ENCODE measurements at regions of chr12 and their contacts with region 1.

Region 1: DNA sequence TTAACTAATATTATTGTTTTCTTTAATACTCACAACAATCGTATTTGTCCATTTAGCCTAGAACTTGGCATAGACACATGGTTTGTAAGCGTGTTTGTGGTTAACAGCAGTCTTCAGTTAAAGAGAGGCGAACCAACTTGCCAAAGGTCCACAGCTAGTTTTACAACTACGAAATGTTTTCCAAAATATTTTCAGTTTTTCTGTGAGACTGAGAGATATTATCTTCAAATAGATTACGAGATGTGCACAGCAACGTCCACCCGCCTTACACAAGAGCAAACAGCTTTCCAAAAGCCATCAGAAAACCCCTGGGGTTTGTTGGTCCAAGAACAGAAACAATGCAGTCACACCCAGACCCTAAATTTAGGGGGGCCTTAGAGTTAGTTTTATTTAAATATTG is 58.6 kb upstream of the RASSF3 start:
- H3K4me3 ChIP-seq: no peak overlapping the region
- H3K27ac ChIP-seq: no peak overlapping the region
- H3K4me1 ChIP-seq: no peaks in the 10 kb centered on the region
- CTCF ChIP-seq: no peak

Region 2: DNA sequence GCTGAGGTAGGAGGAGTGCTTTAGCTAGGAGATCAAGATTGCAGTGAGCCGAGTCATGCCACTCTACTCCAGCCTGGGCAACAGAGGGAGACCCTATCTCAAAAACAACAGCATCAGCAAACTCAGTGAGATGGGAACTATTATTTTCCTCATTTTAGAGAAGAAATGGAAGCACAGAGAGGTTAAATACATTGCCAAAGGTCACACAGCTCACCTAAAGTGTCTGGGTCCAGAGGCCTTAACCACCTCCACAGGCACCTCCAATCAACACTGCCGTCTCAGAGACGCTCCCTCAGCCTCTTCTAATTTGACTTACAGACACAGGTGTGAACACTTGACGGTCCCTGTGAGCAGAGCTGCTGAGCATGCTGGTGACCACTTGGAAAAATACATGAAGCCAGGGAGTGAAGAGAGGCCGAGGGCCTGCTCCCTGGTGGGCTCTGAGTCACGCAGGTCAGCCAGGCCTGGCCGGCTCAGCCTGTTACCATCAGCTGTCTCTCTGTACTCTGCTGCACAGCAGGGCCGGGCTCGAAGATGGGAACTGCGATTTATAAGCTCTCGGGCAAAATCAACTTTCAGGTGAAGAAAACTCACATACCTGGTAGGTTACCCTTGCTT is 18.9 kb before region 1 on chr12:
- CTCF ChIA-PET with region 1: interaction called, 27 read pairs
- POLR2A ChIA-PET with region 1: no interaction called
- H3K4me3 ChIP-seq: no peak overlapping the region
- H3K27ac ChIP-seq: no peak overlapping the region
- H3K4me1 ChIP-seq: no peaks in the 10 kb centered on the region
- CTCF ChIP-seq: no peak

Region 3: GRCh38 chr12:64571411-64571810 is 19.7 kb after region 1 on chr12:
- CTCF ChIA-PET with region 1: interaction called, 15 read pairs
- POLR2A ChIA-PET with region 1: interaction called, 3 read pairs
- H3K4me3 ChIP-seq: no peak overlapping the region
- H3K27ac ChIP-seq: no peak overlapping the region
- H3K4me1 ChIP-seq: no peaks in the 10 kb centered on the region; the same call in 1 of the 2 replicates
- CTCF ChIP-seq: no peak

Region 4: GRCh38 chr12:64610149-64610678 is 58.5 kb after region 1 on chr12 and contains the start of gene RASSF3:
- CTCF ChIA-PET with region 1: interaction called, 27 read pairs
- POLR2A ChIA-PET with region 1: interaction called, 3 read pairs
- H3K4me3 ChIP-seq: peak within 1 kb of the TSS; percentile 78
- H3K27ac ChIP-seq: peak within 1 kb of the TSS; percentile 93
- H3K4me1 ChIP-seq: no peaks in the 10 kb centered on the region
- CTCF ChIP-seq: no peak

Region 5: GRCh38 chr12:64636856-64637255 is 85.2 kb after region 1 on chr12:
- CTCF ChIA-PET with region 1: no interaction called
- POLR2A ChIA-PET with region 1: no interaction called
- H3K4me3 ChIP-seq: no peak overlapping the region
- H3K27ac ChIP-seq: no peak overlapping the region
- H3K4me1 ChIP-seq: peaks cover 16% of the 10 kb centered on the region
- CTCF ChIP-seq: no peak

Region 6: GRCh38 chr12:64696080-64696741 is 144.5 kb after region 1 on chr12:
- CTCF ChIA-PET with region 1: interaction called, 219 read pairs
- POLR2A ChIA-PET with region 1: interaction called, 3 read pairs
- H3K4me3 ChIP-seq: no peak overlapping the region
- H3K27ac ChIP-seq: no peak overlapping the region
- H3K4me1 ChIP-seq: peaks cover 12% of the 10 kb centered on the region
- CTCF ChIP-seq: 0 out of 2 replicates have a peak, but pooled peaks have one; percentile 43

Measured in HEK293 (cell line).